ENCODE measurements at regions of chr2 and their contacts with region 1.

Region 1: GRCh38 chr2:171319164-171319810 is 114.5 kb downstream of the METTL8 start:
- DNase-seq: peak; percentile 53
- ATAC-seq: peak; percentile 21
- H3K4me3 ChIP-seq: peak overlapping the region in 3 of 5 experiments; percentile 4 to 48 (median 12)
- H3K4me3 Mint-ChIP-seq: peak overlapping the region; percentile 80
- H3K27ac ChIP-seq: peak overlapping the region; percentile 73 to 79
- H3K27ac Mint-ChIP-seq: peak overlapping the region; percentile 91
- H3K4me1 ChIP-seq: peaks cover 67 to 77% of the 10 kb centered on the region in 2 donors
- H3K4me1 Mint-ChIP-seq: peaks cover 73% of the 10 kb centered on the region
- H3K27me3 ChIP-seq: no peaks in the 10 kb centered on the region
- H3K27me3 Mint-ChIP-seq: no peaks in the 10 kb centered on the region
- CTCF ChIP-seq: no peak

Region 2: GRCh38 chr2:170973492-170974303 is 345.6 kb before region 1 on chr2:
- CTCF ChIA-PET with region 1: interaction called, 3 read pairs
- POLR2A ChIA-PET with region 1: no interaction called
- intact Hi-C with region 1: loop called (anchors 10 kb)
- DNase-seq: peak; percentile 92
- ATAC-seq: peak; percentile 97
- H3K4me3 ChIP-seq: peak overlapping the region; percentile 43 to 86 (median 80)
- H3K4me3 Mint-ChIP-seq: peak overlapping the region; percentile 92
- H3K27ac ChIP-seq: peak overlapping the region; percentile 42 to 61
- H3K27ac Mint-ChIP-seq: peak overlapping the region; percentile 78
- H3K4me1 ChIP-seq: peaks cover 11 to 12% of the 10 kb centered on the region in 2 donors
- H3K4me1 Mint-ChIP-seq: peaks cover 12% of the 10 kb centered on the region
- H3K27me3 ChIP-seq: no peaks in the 10 kb centered on the region
- H3K27me3 Mint-ChIP-seq: no peaks in the 10 kb centered on the region
- CTCF ChIP-seq: peak; percentile 94

Region 3: DNA sequence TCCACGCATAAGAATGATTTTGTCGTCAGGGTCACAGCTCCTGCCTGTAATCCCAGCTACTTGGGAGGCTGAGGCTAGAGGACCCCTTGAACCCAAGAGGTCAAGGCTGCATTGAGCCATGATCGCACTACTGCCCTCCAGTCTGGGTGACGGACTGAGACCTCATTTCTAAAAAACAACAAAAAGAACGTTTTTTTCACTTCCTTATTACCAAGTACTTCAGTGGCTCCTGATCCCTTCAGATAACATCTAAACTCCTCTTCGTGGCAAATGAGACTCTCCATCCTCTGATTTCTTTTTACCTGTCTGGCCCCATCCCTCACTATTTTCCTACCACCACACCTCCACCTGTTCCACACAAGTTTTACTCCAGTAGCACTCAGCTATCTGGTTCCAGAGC is 53.2 kb before region 1 on chr2:
- CTCF ChIA-PET with region 1: interaction called, 3 read pairs
- POLR2A ChIA-PET with region 1: no interaction called
- intact Hi-C with region 1: loop called (anchors 5 kb)
- DNase-seq: peak; percentile 29
- ATAC-seq: peak; percentile 51
- H3K4me3 ChIP-seq: no peak overlapping the region
- H3K4me3 Mint-ChIP-seq: no peak overlapping the region
- H3K27ac ChIP-seq: no peak overlapping the region
- H3K27ac Mint-ChIP-seq: no peak overlapping the region
- H3K4me1 ChIP-seq: peaks cover 12 to 13% of the 10 kb centered on the region in 2 donors
- H3K4me1 Mint-ChIP-seq: peaks cover 6% of the 10 kb centered on the region
- H3K27me3 ChIP-seq: no peaks in the 10 kb centered on the region
- H3K27me3 Mint-ChIP-seq: no peaks in the 10 kb centered on the region
- CTCF ChIP-seq: no peak

Region 4: DNA sequence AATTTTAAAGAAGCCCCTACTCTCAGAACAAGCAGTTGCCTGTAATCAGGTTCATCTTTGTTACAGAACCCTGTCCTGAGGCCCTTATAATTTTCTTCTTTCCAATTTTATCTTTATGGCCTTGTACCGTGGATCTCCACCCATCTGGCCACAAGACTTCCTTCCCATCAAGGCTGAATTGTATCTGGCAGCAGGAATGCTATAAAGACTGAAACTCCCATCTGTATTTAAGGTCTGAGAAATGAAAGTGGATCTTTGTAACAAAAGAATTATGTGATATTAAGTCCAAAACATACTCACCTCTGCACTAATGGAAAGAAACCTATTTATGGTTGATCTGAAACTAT is 22.8 kb after region 1 on chr2:
- CTCF ChIA-PET with region 1: interaction called, 6 read pairs
- POLR2A ChIA-PET with region 1: interaction called, 4 read pairs
- intact Hi-C with region 1: loop called (anchors 2 kb)
- DNase-seq: no peak
- ATAC-seq: no peak
- H3K4me3 ChIP-seq: no peak overlapping the region
- H3K4me3 Mint-ChIP-seq: no peak overlapping the region
- H3K27ac ChIP-seq: peak overlapping the region in 1 of 2 donors; percentile 60
- H3K27ac Mint-ChIP-seq: peak overlapping the region; percentile 32
- H3K4me1 ChIP-seq: peaks cover 7 to 20% of the 10 kb centered on the region in 2 donors
- H3K4me1 Mint-ChIP-seq: peaks cover 31% of the 10 kb centered on the region
- H3K27me3 ChIP-seq: no peaks in the 10 kb centered on the region
- H3K27me3 Mint-ChIP-seq: no peaks in the 10 kb centered on the region
- CTCF ChIP-seq: no peak

Region 5: GRCh38 chr2:171433763-171434670 is 114.7 kb after region 1 on chr2 and contains the starts of genes DCAF17 and METTL8:
- CTCF ChIA-PET with region 1: interaction called, 6 read pairs
- POLR2A ChIA-PET with region 1: interaction called, 3 read pairs
- intact Hi-C with region 1: loop called (anchors 5 kb)
- DNase-seq: peak; percentile 96
- ATAC-seq: peak; percentile 89
- H3K4me3 ChIP-seq: peak within 1 kb of the TSS; percentile 67 to 87 (median 80)
- H3K4me3 Mint-ChIP-seq: peak within 1 kb of the TSS; percentile 91
- H3K27ac ChIP-seq: peak within 1 kb of the TSS; percentile 84 to 85
- H3K27ac Mint-ChIP-seq: peak within 1 kb of the TSS; percentile 96
- H3K4me1 ChIP-seq: peaks cover 7 to 10% of the 10 kb centered on the region in 2 donors
- H3K4me1 Mint-ChIP-seq: peaks cover 24% of the 10 kb centered on the region
- H3K27me3 ChIP-seq: no peaks in the 10 kb centered on the region
- H3K27me3 Mint-ChIP-seq: no peaks in the 10 kb centered on the region
- CTCF ChIP-seq: peak; percentile 61
- total RNA-seq, gene DCAF17: 27.9 and 29.4 TPM in 2 replicates
- total RNA-seq, gene METTL8: 57.8 and 58.6 TPM in 2 replicates

Region 6: DNA sequence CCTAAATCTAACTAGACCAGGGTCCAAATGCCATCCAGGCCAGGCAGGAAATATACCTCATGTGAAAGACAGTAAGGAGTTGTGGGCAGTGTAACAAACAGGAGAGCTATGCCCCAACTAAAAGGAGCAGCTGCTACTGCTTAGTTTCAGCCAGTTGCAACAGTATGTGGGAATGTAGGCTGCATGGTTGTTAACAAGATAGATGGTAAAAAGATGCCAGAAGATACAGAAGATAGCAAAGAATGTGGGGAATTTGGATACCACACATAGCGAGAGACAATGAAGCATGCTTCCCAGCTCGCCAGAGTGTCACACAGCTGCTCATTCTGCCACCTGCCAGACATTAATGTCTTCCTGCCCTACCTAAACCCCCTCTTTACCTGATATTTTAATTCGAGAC is 163.6 kb after region 1 on chr2:
- CTCF ChIA-PET with region 1: no interaction called
- POLR2A ChIA-PET with region 1: no interaction called
- intact Hi-C with region 1: no loop called
- DNase-seq: no peak
- ATAC-seq: no peak
- H3K4me3 ChIP-seq: no peak overlapping the region
- H3K4me3 Mint-ChIP-seq: no peak overlapping the region
- H3K27ac ChIP-seq: no peak overlapping the region
- H3K27ac Mint-ChIP-seq: no peak overlapping the region
- H3K4me1 ChIP-seq: no peaks in the 10 kb centered on the region
- H3K4me1 Mint-ChIP-seq: no peaks in the 10 kb centered on the region
- H3K27me3 ChIP-seq: no peaks in the 10 kb centered on the region
- H3K27me3 Mint-ChIP-seq: no peaks in the 10 kb centered on the region
- CTCF ChIP-seq: no peak

Region 7: DNA sequence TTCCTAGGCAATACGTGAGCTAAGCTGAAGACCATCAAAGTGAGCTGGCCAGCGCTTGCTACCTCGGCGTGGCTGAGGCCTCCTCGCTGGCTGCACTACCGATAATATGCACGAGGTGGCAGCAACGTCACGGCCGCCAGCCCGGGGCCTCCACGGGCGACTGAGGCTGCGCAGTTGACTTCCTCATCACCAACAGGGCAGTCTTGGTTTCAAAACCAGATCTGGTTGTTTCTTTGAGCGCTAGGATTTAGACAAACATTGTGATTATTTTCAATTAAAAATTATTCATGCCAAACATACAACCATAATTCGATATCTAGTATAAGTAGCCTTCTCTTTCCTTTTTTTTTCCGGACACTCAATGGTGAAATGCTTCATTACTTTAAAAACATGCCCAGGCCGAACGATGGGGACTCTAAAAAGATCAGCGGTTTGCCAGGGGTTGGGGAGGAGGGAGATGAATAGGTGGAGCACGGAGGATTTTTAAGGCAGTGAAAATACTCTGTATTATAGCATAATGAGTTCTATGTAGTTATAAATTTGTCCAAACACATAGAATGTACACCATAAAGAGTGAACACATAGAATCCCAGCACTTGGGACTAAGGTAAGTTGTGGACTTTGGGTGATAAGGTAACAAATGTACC is 255.0 kb after region 1 on chr2:
- CTCF ChIA-PET with region 1: no interaction called
- POLR2A ChIA-PET with region 1: no interaction called
- intact Hi-C with region 1: loop called (anchors 5 kb)
- DNase-seq: peak; percentile 87
- ATAC-seq: peak; percentile 100
- H3K4me3 ChIP-seq: peak overlapping the region in 1 of 5 experiments; percentile 5
- H3K4me3 Mint-ChIP-seq: peak overlapping the region; percentile 37
- H3K27ac ChIP-seq: no peak overlapping the region
- H3K27ac Mint-ChIP-seq: no peak overlapping the region
- H3K4me1 ChIP-seq: peaks cover 0 to 4% of the 10 kb centered on the region in 2 donors
- H3K4me1 Mint-ChIP-seq: peaks cover 6% of the 10 kb centered on the region
- H3K27me3 ChIP-seq: no peaks in the 10 kb centered on the region
- H3K27me3 Mint-ChIP-seq: peaks cover 8% of the 10 kb centered on the region
- CTCF ChIP-seq: peak; percentile 97